AG04449 (cell line): ENCODE measurements at regions of chr11 and their contacts with region 1.

Region 1: GRCh38 chr11:67345920-67346799 is 7.2 kb downstream of the POLD4 start:
- DNase-seq: no peak
- H3K4me3 ChIP-seq: no peak overlapping the region
- CTCF ChIP-seq: peak; percentile 70

Region 2: DNA sequence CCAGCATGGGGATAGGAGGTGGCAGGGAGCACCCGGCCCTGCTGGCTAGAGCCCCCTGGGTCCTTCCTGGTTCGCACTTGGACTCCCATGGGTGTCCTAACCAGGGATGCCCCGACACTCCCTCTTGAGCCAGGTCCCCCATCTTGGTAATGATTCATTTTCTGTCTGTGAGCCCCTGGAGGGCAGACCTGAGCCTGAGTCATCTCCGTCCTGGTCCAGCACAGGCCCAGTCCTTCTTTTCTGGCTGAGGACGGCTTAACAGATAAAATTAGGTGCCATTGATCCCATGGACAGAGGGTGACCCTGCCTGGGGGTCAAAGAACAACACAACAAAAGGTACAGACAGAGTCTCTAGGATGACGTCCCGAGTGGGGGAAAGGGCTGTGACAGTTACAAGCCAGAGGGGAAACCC is 286.0 kb before region 1 on chr11:
- CTCF ChIA-PET with region 1: no interaction called
- POLR2A ChIA-PET with region 1: no interaction called
- DNase-seq: no peak
- H3K4me3 ChIP-seq: no peak overlapping the region
- CTCF ChIP-seq: no peak

Region 3: DNA sequence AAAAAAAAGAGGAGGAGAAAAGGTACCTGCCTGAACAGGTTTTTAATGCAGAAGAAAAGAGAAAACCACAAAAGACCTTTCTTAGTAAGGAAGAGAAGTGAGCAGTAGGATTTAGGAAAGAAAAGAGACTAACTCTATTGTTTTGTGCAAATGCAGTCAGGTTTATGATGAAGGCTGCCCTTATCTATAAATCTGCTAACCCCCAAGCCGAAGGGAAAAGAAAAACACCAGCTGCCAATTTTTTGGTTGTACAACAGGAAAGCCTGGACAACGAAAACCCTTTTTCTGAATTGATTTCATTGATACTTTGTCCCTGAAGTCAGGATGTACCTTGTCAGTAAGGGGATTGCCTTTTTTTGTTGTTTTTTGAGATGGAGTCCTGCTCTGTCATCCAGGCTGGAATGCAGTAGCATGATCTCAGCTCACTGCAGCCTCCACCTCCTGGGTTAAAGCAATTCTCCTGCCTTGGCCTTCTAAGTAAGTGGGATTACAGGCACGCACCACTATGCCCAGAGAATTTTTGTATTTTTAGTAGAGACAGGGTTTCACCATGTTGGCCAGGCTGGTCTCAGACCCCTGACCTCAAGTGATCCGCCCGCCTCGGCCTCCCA is 14.0 kb before region 1 on chr11:
- CTCF ChIA-PET with region 1: interaction called, 224 read pairs
- POLR2A ChIA-PET with region 1: no interaction called
- DNase-seq: no peak
- H3K4me3 ChIP-seq: no peak overlapping the region
- CTCF ChIP-seq: no peak

Region 4: DNA sequence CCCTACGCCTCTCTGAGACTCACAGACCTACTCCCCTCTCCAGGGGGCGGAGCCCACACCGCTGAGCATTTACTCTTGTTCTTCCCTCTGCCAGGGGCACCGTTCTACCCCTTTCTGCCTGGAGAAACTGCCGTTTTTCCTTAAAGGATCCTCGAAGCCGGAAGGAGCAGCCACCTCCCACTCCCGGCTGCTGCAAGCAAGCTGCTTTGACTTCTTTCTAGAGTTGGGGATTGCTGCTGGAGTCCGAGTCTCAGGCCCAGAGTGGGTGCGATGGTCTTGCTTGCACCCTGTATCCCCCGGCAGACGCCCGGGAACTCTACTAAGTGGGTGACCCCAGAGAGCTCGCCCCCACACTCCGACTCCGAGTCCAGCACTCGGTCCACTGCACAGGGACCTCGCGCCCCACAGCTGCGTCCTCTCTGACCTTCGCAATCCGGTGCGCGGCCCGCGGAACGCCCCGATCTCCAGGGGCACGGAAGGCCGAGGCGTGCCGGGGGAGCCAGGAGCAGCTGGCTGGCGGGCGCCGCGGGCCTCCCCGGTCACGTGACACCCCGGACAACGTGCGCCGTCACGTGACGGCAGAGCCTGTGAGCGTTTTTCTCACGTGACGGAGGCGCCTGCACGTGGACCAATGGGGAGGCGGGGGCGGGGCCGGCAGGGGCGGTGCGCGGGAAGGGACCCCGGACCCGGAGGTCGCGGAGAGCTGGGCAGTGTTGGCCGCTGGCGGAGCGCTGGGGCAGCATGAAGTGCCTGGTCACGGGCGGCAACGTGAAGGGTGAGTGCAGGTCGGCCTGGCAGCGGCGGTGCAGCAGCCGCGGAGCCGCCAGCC is 45.4 kb after region 1 on chr11 and contains the start of gene RAD9A:
- CTCF ChIA-PET with region 1: interaction called, 2,108 read pairs
- POLR2A ChIA-PET with region 1: no interaction called
- DNase-seq: no peak
- H3K4me3 ChIP-seq: peak within 1 kb of the TSS; percentile 95
- CTCF ChIP-seq: no peak

Region 5: GRCh38 chr11:67468835-67469811 is 123.0 kb after region 1 on chr11 and contains the start of gene TMEM134:
- CTCF ChIA-PET with region 1: interaction called, 14 read pairs
- POLR2A ChIA-PET with region 1: interaction called, 3 read pairs
- DNase-seq: peak; percentile 19
- H3K4me3 ChIP-seq: peak within 1 kb of the TSS; percentile 79
- CTCF ChIP-seq: peak; percentile 71

Region 6: DNA sequence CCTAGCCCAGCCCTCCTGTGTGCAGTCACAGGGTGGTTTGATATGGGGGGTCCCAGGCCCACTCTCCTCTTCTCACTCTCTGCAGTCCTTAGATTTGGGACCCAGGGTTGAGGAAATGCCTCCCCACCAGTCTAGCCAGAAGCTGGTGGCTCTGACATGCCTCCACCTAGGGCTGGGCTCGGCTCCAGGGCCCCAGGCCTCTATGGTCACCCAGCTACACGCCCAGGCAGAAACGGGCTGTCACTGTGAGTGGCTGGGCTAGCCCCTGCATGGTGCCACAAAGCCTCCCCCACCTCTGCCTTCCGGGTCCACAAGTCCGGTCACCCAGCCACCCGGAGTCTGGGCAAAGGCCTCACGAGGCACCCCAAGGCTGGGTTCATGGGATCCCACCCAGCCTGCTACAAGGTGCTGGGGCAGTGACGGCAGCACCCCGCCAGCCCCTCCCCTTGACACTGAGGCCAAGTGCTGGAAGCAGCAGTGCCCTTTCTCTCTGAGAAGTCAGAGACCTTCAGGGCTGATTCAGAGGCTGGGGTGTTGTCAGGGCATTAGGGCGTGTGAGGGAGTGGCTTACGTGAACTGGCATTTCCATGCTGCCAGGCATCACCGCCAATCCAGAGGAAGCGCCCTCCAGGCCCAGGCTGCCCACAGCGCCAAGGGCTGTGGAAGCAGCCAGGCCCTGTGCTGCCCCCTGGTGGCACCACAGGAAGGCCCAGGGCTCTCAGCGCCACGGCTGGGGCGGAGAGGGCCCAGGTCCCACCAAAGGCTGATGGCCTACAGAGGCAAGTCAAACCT is 159.6 kb after region 1 on chr11:
- CTCF ChIA-PET with region 1: interaction called, 10 read pairs
- POLR2A ChIA-PET with region 1: no interaction called
- DNase-seq: no peak
- H3K4me3 ChIP-seq: peak overlapping the region; percentile 76
- CTCF ChIP-seq: peak; percentile 98